Gastrocnemius medialis (tissue), 4 donors: ENCODE measurements at regions of chr4 and their contacts with region 1.

Region 1: GRCh38 chr4:84750253-84750959 is 167.5 kb downstream of the CDS1 start:
- DNase-seq: no peak
- ATAC-seq: peak; percentile 65 to 75
- H3K4me3 ChIP-seq: no peak overlapping the region
- H3K27ac ChIP-seq: no peak overlapping the region
- H3K4me1 ChIP-seq: no peaks in the 10 kb centered on the region
- H3K27me3 ChIP-seq: no peaks in the 10 kb centered on the region
- CTCF ChIP-seq: peak; percentile 27 to 71 (median 51)
- POLR2A ChIP-seq: no peak

Region 2: DNA sequence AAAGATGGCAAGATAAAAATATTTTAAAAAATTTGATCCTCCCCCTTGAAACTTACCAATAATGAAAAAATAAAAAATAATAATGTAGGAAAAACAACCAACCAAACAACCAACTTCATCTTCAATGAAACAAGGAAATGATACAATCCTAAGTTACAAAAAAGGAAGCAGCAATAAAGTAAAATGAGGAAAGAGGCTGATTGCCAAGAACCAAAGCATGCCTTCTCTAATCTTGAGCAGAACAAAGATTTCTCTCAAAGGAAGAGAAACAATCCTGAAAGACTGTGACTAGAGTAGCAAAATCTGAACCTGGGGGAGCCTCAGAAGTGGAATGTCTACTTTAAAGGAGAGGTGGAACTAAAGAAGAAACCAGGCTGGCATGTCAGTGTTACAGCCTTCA is 227.0 kb after region 1 on chr4:
- in situ Hi-C with region 1: loop called (anchors 5 to 10 kb)
- intact Hi-C with region 1: no loop called
- DNase-seq: no peak
- ATAC-seq: no peak
- H3K4me3 ChIP-seq: no peak overlapping the region
- H3K27ac ChIP-seq: no peak overlapping the region
- H3K4me1 ChIP-seq: no peaks in the 10 kb centered on the region
- H3K27me3 ChIP-seq: no peaks in the 10 kb centered on the region
- CTCF ChIP-seq: no peak
- POLR2A ChIP-seq: no peak